Heart right ventricle (tissue), 16 donors: ENCODE measurements at regions of chr19 and their contacts with region 1.

Region 1: DNA sequence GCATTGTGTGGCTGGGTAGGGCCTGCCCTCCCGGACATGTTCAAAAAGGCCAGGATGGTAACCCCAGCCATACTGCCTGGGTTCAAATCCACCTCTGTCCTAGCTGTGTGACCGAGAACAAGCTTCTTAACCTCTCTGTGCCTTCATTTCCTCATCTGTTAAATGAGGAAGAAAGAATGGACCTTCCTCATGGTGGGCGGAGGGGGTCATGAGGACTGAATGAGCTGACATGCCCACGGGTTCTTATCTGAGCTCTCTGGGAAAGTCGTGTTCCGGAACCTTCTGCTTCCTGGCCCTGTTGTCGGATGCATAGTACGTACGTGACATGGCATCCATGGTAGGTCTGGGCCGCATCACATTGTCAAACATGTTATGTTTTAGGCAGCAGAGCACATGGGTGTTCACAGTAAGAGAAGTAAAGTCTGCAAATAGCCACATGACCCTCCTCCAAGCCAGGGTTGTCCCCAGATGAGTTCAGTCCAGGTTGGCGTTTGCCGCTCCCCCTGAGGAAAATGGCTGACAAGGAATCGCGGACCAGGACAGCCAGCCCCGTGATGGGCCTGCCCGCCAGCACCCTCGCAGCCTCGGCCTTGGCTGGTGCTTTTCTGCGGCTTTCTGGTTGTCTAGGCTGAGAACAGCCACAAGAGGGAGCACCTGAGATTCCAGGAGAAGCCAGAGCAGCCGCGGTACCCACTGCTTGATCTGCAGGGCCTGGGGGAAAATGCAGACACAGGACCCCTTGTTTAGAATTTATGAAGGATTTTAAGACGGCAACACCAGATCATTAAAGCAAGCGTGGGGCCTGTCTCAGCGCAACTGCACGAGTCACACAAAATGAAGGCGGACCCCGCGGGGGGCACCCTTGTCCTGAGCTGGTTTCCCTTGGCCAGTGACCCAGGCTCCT is 2.4 kb upstream of the NTN5 start:
- DNase-seq: peak; percentile 73 to 87
- ATAC-seq: peak; percentile 71 to 90 (median 86)
- H3K4me3 ChIP-seq: peak overlapping the region in 1 of 10 donors; percentile 10
- H3K27ac ChIP-seq: peak overlapping the region in 1 of 10 donors; percentile 7
- H3K4me1 ChIP-seq: peaks cover 0 to 10% (median 9%) of the 10 kb centered on the region in 9 donors
- H3K27me3 ChIP-seq: peaks cover 0 to 5% (median 0%) of the 10 kb centered on the region in 7 donors
- CTCF ChIP-seq: peak; percentile 79 to 91 (median 87)

Region 2: DNA sequence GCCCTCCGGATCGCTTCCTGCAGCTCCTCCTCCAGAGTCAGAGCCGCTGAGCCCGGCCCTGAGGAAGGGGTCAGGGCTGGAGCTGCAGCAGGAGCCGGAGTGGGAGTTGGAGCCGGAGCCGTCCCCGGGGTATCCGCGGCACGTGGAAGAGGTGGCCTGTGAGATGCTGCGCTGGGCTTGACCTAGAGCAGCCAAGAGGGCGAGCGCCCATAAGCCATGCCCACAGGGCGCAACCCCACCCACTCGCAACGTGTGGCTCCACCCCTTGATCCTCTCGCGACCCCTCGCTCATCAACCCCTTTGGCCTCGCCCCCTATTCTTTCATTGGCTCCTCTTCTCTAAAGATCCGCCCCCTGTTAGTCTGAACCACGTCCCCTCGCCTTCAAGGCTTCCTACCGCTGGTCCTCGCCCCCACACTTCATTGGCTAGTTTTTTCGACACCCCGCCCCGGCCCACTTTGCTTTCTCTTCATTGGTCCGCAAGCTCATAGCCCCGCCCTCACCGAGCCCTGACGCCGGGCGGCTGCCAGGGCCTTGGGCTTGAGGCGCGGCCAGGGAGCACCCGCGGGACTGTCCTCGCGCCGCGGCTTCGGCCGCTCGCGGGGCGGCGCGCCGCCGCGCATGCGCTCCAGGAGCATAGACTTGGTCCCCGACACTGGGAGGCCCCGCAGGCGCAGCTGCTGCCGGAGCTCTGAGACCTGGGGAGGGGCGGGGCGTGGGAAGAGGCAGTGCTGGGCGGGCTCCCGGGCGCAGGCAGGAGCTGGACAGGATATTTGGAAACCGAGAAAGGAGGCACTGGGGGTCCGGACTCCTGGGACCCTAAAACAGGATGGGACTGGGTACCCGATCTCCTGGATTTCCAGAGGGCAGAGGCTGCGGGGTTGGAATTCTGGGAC is 38.9 kb after region 1 on chr19:
- intact Hi-C with region 1: loop called in 6 of 10 experiments (anchors 2 to 5 kb)
- DNase-seq: peak; percentile 99
- ATAC-seq: peak; percentile 90 to 94 (median 92)
- H3K4me3 ChIP-seq: peak overlapping the region; percentile 47 to 86 (median 70)
- H3K27ac ChIP-seq: peak overlapping the region; percentile 19 to 94 (median 87)
- H3K4me1 ChIP-seq: peaks cover 15 to 59% (median 44%) of the 10 kb centered on the region in 9 donors
- H3K27me3 ChIP-seq: no peaks in the 10 kb centered on the region
- CTCF ChIP-seq: peak in 2 of 9 donors; percentile 15 to 20

Region 3: DNA sequence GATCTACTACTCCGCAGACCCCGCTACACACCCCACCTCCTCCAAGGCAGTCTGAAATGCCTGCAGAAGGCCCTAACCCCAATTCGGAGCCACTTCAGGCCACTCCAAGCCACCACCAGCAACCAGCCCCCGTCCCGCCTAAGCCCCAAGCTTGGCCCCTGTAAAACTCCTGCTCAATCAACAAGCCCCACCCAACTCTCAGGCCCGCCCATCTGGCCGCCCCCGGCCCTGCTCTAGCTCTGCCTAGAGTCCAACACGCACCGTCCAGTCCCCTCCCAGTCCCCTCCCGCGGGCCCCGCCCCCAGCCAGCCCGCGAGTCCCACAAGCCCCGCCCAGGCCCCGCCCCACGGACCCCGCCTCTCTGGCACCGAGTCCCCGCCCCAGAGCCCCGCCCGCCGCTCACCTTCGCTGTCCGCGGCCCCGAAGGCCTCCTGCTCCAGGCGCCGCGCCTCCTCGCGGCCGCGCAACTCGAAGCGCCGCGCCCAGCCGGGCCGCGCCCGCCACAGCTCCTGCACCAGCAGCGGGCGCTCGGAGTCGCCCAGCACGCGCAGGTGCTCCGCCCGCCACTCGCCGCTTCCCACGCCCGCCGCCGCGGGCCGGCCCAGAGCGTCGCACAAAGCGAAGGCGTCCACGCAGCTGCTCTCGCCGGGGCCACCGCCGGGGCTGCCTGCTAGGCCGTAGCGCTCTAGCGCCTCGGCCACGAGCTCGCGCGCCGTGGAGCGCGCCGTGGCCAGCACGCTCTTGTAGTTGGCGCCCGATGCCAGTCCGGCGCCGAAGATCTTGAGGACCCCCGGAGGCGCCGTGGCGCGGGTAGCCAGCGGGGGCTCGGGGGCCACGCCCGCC is 63.6 kb after region 1 on chr19:
- intact Hi-C with region 1: loop called in 3 of 10 experiments (anchors 10 kb)
- DNase-seq: peak; percentile 95 to 97
- ATAC-seq: peak; percentile 82 to 90 (median 86)
- H3K4me3 ChIP-seq: peak overlapping the region; percentile 60 to 84 (median 71)
- H3K27ac ChIP-seq: peak overlapping the region; percentile 81 to 97 (median 94)
- H3K4me1 ChIP-seq: peaks cover 0 to 36% (median 19%) of the 10 kb centered on the region in 9 donors
- H3K27me3 ChIP-seq: peaks cover 0 to 21% (median 0%) of the 10 kb centered on the region in 7 donors
- CTCF ChIP-seq: peak in 8 of 9 donors; percentile 12 to 73 (median 36)

Region 4: DNA sequence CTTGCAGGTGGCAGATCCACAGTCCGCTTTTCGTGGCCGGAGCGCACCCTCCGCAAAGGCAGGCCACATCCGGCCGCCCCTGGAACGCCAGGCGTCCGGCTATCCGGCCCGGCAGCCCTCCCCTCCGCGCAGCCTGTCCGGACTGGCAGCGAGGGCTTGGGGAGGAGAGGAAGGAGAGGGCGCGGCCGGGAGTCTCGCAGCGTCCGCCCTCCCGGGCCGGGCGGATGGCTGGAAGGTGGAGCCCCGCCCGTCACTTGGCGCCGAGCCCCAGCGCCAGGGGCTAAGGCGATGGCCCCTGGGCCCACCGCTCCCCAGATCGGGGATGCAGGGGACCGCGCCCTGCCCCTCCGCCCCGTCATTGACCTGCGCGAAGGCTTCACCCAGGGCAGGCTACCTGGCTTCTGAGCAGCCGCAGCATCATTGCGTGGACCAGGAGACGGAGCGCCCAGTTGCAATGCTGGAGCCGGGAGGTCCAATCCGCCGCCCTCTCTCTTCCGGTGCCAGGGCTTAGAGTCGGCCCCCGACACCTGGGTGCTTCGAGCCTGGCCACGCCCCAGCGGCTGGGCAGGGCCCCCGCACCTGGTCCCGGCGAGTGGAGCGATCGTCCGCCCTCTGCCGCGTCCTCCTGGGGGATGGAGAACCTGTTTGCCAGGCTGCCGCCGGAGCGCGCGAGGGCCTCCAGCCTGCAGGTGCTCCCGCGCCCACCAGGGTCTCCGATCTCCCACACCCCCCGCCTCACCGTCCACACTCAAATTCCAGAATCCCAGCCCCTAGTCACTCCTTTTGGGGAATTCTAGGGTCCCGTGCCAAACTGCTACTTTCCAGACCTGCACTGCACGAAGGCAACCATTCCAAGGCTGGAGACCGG is 77.6 kb after region 1 on chr19 and contains the start of gene FUT1:
- intact Hi-C with region 1: no loop called
- DNase-seq: peak; percentile 78 to 79
- ATAC-seq: peak; percentile 84 to 93 (median 90)
- H3K4me3 ChIP-seq: peak within 1 kb of the TSS; percentile 27 to 66 (median 58)
- H3K27ac ChIP-seq: peak within 1 kb of the TSS; percentile 62 to 89 (median 79)
- H3K4me1 ChIP-seq: peaks cover 7 to 40% (median 22%) of the 10 kb centered on the region in 9 donors
- H3K27me3 ChIP-seq: peaks cover 0 to 39% (median 19%) of the 10 kb centered on the region in 7 donors
- CTCF ChIP-seq: no peak
- total RNA-seq, gene FUT1: 1.8 to 5.7 (median 2.7) TPM

Region 5: DNA sequence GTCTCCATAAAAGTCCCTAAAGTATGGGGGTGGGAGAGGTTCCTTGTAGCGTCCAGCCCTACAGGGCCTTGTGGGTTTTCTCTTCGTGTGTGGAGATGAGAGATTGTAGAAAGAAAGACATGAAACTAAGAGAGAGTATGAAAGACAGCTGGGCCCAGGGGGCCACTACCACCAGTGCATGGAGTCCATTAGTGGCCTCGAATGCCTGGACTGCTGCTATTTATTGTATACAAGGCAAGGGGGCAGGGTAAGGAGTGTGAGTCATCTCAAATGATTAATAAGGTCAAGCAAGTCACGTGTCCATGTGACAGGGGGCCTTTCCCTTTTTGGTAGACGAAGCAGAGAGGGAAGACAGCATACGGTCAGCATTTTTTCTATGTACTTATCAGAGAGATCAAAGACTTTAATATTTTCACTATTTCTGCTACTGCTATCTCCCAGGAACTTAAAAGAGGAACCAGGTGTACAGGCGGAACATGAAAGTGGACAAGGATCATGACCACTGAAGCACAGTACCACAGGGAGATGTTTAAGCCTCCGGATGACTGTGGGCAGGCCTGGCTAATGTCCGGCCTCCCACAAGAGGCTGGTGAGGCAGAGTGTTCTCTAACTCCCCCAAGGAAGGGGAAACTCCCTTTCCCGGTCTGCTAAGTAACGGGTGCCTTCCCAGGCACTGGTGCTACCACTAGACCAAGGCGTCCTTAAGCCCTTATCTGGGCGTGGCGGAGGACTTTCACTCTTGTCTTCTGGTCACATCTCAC is 105.6 kb after region 1 on chr19:
- intact Hi-C with region 1: loop called in 2 of 10 experiments (anchors 5 to 10 kb)
- DNase-seq: no peak
- ATAC-seq: peak in 5 of 8 donors; percentile 3 to 31 (median 16)
- H3K4me3 ChIP-seq: no peak overlapping the region
- H3K27ac ChIP-seq: peak overlapping the region in 8 of 10 donors; percentile 55 to 74 (median 67)
- H3K4me1 ChIP-seq: peaks cover 0 to 35% (median 10%) of the 10 kb centered on the region in 9 donors
- H3K27me3 ChIP-seq: no peaks in the 10 kb centered on the region
- CTCF ChIP-seq: no peak

Region 6: DNA sequence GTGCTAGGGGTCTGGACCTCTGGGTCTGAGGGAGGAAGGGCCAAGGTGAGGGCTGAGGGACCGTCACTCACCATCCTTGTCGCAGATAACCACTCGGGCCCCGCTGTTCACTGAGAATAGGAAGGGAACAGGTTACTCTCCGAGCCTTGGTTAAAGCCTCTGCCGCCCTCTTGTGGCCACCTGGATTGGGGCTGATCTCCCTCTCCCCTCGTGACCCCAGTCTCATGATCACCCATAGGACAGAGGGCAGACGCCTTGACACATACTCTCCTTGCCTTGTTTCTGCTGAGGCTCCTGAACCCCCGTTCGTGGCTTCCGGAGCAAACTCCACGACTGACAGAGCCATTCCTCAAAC is 160.5 kb after region 1 on chr19:
- intact Hi-C with region 1: loop called in 4 of 10 experiments (anchors 10 kb)
- DNase-seq: peak; percentile 93
- ATAC-seq: peak; percentile 91 to 96 (median 92)
- H3K4me3 ChIP-seq: peak overlapping the region; percentile 21 to 55 (median 42)
- H3K27ac ChIP-seq: peak overlapping the region in 8 of 10 donors; percentile 29 to 77 (median 64)
- H3K4me1 ChIP-seq: peaks cover 0 to 21% (median 10%) of the 10 kb centered on the region in 9 donors
- H3K27me3 ChIP-seq: peaks cover 0 to 4% (median 0%) of the 10 kb centered on the region in 7 donors
- CTCF ChIP-seq: peak; percentile 82 to 94 (median 90)

Region 7: GRCh38 chr19:48842789-48843162 is 167.6 kb after region 1 on chr19:
- intact Hi-C with region 1: loop called in 4 of 10 experiments (anchors 10 kb)
- DNase-seq: peak in 1 of 2 donors; percentile 60
- ATAC-seq: peak; percentile 21 to 68 (median 52)
- H3K4me3 ChIP-seq: no peak overlapping the region
- H3K27ac ChIP-seq: no peak overlapping the region
- H3K4me1 ChIP-seq: no peaks in the 10 kb centered on the region
- H3K27me3 ChIP-seq: no peaks in the 10 kb centered on the region
- CTCF ChIP-seq: peak; percentile 63 to 87 (median 79)